ENCODE measurements at regions of chr2 and their contacts with region 1.

Region 1: DNA sequence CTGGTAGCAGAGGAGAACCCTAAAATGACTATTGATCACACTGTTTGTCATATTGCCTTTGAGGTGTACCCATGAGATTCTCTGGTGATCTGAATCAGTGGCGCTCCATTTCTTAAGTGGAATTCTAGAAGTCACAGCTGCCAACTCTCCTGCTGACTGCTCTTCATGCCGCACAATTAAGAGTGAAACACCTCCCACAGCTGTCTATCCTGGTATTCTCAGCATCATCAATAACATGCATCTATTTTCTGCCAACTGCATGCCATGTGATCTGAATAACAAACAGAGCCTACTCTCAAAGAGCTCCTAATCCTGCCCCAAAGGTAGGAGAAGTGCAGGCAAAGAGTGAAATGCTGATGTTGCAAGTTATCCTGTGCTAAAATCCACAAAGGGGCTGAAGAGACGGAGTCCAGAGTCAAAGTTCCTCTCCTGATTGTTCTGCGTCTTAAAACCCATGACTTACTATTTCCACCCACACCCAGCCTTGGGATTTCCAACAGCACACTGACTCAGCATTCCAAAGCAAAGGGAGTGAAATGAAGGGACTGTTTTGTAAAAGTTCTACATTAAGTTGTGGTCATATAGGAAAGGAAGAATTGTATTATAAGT is 13.7 kb upstream of the DAPL1 start:
- DNase-seq: no peak
- H3K4me3 ChIP-seq: no peak overlapping the region
- H3K27ac ChIP-seq: peak overlapping the region; percentile 32 to 34
- H3K4me1 ChIP-seq: peaks cover 3 to 33% of the 10 kb centered on the region in 2 donors
- H3K27me3 ChIP-seq: no peaks in the 10 kb centered on the region
- CTCF ChIP-seq: no peak

Region 2: DNA sequence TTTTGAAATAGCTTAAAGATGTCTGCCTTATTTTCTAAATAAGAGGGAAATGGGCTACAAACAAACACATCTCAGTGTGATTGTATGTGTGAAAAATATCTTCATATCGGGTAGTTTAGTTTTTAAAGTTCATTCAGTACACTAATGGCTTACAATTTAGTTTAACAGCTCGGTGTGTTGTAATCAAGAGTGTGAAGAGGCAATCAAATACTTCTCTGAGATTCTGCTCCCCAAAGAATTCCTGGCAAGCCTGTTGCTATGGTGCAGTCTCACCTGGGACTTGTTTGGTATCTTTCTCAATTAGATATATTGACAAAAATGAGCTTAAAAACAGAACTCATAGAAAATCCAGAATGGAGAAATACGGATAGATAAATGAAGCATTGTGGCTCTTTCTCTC is 225.3 kb before region 1 on chr2:
- intact Hi-C with region 1: no loop called
- DNase-seq: no peak
- H3K4me3 ChIP-seq: no peak overlapping the region
- H3K27ac ChIP-seq: no peak overlapping the region
- H3K4me1 ChIP-seq: no peaks in the 10 kb centered on the region
- H3K27me3 ChIP-seq: no peaks in the 10 kb centered on the region
- CTCF ChIP-seq: no peak

Region 3: GRCh38 chr2:158841850-158842249 is 60.4 kb after region 1 on chr2:
- intact Hi-C with region 1: loop called (anchors 5 kb)
- DNase-seq: no peak
- H3K4me3 ChIP-seq: no peak overlapping the region
- H3K27ac ChIP-seq: peak overlapping the region; percentile 54 to 63
- H3K4me1 ChIP-seq: peaks cover 3 to 31% of the 10 kb centered on the region in 2 donors
- H3K27me3 ChIP-seq: no peaks in the 10 kb centered on the region
- CTCF ChIP-seq: no peak

Region 4: GRCh38 chr2:159185401-159186130 is 404.1 kb after region 1 on chr2:
- intact Hi-C with region 1: loop called (anchors 5 kb)
- DNase-seq: no peak
- H3K4me3 ChIP-seq: no peak overlapping the region
- H3K27ac ChIP-seq: no peak overlapping the region
- H3K4me1 ChIP-seq: no peaks in the 10 kb centered on the region
- H3K27me3 ChIP-seq: no peaks in the 10 kb centered on the region
- CTCF ChIP-seq: no peak

Measured in ascending aorta (tissue), 2 donors.